CD8-positive, alpha-beta memory T cell (primary cell): ENCODE measurements at regions of chr16 and their contacts with region 1.

Region 1: GRCh38 chr16:17467923-17468540 is 2.7 kb downstream of the XYLT1 start:
- DNase-seq: peak in 2 of 5 donors; percentile 37 to 62
- H3K4me3 ChIP-seq: no peak overlapping the region
- H3K4me3 Mint-ChIP-seq: peak overlapping the region; percentile 57 to 98 (median 97)
- H3K27ac ChIP-seq: no peak overlapping the region
- H3K27ac Mint-ChIP-seq: peak overlapping the region in 7 of 8 donors; percentile 7 to 95 (median 26)
- H3K4me1 ChIP-seq: peaks cover 26% of the 10 kb centered on the region
- H3K4me1 Mint-ChIP-seq: peaks cover 44 to 56% (median 56%) of the 10 kb centered on the region in 3 donors
- H3K27me3 ChIP-seq: no peaks in the 10 kb centered on the region
- H3K27me3 Mint-ChIP-seq: peaks cover 0 to 2% of the 10 kb centered on the region in 2 donors

Region 2: GRCh38 chr16:17416461-17417311 is 51.3 kb before region 1 on chr16:
- CTCF ChIA-PET with region 1: interaction called, 13 read pairs
- POLR2A ChIA-PET with region 1: no interaction called
- DNase-seq: peak in 4 of 5 donors; percentile 12 to 65 (median 53)
- H3K4me3 ChIP-seq: peak overlapping the region; percentile 38
- H3K4me3 Mint-ChIP-seq: peak overlapping the region; percentile 38 to 92 (median 84)
- H3K27ac ChIP-seq: peak overlapping the region; percentile 12
- H3K27ac Mint-ChIP-seq: peak overlapping the region; percentile 43 to 96 (median 91)
- H3K4me1 ChIP-seq: peaks cover 20% of the 10 kb centered on the region
- H3K4me1 Mint-ChIP-seq: peaks cover 44 to 63% (median 48%) of the 10 kb centered on the region in 3 donors
- H3K27me3 ChIP-seq: no peaks in the 10 kb centered on the region
- H3K27me3 Mint-ChIP-seq: no peaks in the 10 kb centered on the region

Region 3: DNA sequence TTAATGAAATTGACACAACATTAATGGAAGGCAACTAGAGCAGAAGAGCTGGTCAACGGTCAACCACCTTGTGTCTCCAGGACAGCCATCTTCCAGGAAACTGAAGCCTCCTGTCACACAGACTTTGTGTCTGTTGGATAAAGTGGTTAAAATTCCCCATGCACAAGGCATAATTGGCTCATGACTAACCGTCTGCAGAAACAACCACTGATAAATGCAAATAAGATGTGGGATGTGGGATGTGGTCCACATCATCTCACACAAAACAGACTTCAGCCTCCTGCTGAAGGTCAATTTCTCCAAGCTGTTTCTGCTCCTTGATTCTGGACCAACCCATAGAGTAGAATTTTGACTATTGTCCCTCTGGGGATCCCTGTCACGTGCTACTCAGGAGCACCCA is 29.6 kb after region 1 on chr16:
- CTCF ChIA-PET with region 1: no interaction called
- POLR2A ChIA-PET with region 1: no interaction called
- DNase-seq: no peak
- H3K4me3 ChIP-seq: no peak overlapping the region
- H3K4me3 Mint-ChIP-seq: no peak overlapping the region
- H3K27ac ChIP-seq: no peak overlapping the region
- H3K27ac Mint-ChIP-seq: no peak overlapping the region
- H3K4me1 ChIP-seq: no peaks in the 10 kb centered on the region
- H3K4me1 Mint-ChIP-seq: no peaks in the 10 kb centered on the region
- H3K27me3 ChIP-seq: no peaks in the 10 kb centered on the region
- H3K27me3 Mint-ChIP-seq: peaks cover under 1 to 14% of the 10 kb centered on the region in 2 donors